Pancreas (tissue), 10 donors: ENCODE measurements at regions of chr16 and their contacts with region 1.

Region 1: GRCh38 chr16:57422026-57422944 is 17.7 kb downstream of the CCL17 start:
- DNase-seq: peak in 5 of 6 donors; percentile 39 to 56 (median 42)
- ATAC-seq: peak in 3 of 4 donors; percentile 71 to 81 (median 72)
- H3K4me3 ChIP-seq: no peak overlapping the region
- H3K27ac ChIP-seq: no peak overlapping the region
- H3K4me1 ChIP-seq: peaks cover 0 to 3% (median 2%) of the 10 kb centered on the region in 3 donors
- H3K27me3 ChIP-seq: no peaks in the 10 kb centered on the region
- CTCF ChIP-seq: peak; percentile 22 to 43 (median 42)

Region 2: GRCh38 chr16:57091975-57092785 is 330.1 kb before region 1 on chr16 and contains the start of gene CPNE2:
- intact Hi-C with region 1: loop called in 1 of 3 experiments (anchors 10 kb)
- DNase-seq: peak in 5 of 6 donors; percentile 60 to 85 (median 70)
- ATAC-seq: peak; percentile 82 to 92 (median 84)
- H3K4me3 ChIP-seq: peak within 1 kb of the TSS; percentile 57 to 89 (median 79)
- H3K27ac ChIP-seq: peak within 1 kb of the TSS; percentile 22 to 65 (median 36)
- H3K4me1 ChIP-seq: peaks cover 0 to 8% (median 0%) of the 10 kb centered on the region in 3 donors
- H3K27me3 ChIP-seq: no peaks in the 10 kb centered on the region
- CTCF ChIP-seq: no peak
- total RNA-seq, gene CPNE2: 3.2 to 12.4 (median 4.3) TPM

Region 3: DNA sequence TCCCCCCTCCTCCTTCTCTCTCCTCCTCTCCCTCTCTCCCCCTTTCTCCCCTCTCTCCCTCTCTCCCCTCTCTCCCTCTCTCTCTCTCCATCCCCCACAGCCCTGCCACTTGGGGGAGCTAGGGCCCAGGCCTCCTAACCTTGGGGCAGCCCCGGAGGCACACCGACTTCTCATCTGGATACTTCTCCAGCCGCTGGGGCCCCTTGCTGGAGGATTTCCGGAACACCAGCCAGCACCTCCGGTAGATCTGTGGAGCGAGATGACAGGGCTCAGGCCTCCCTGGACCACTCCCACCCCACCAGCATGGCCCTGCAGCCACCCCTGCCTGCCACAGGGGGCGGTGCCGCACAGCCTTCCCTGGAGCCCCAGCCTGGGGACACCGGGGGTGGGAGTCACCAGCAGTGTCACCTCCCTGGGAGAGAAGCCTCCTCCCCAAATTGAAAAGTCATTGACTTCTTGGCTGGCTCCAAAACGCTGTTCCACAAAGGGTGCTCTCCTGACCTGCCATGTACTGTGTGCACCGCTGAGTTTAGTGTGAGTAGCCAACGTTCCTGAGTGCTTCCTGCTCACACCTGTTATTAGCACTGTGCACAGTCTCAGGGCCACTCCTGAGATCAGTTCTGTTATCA is 53.5 kb after region 1 on chr16:
- intact Hi-C with region 1: no loop called
- DNase-seq: peak in 1 of 6 donors; percentile 69
- ATAC-seq: peak in 1 of 4 donors; percentile 27
- H3K4me3 ChIP-seq: no peak overlapping the region
- H3K27ac ChIP-seq: no peak overlapping the region
- H3K4me1 ChIP-seq: peaks cover 15 to 36% (median 15%) of the 10 kb centered on the region in 3 donors
- H3K27me3 ChIP-seq: no peaks in the 10 kb centered on the region
- CTCF ChIP-seq: no peak

Region 4: GRCh38 chr16:57519796-57520360 is 97.6 kb after region 1 on chr16:
- intact Hi-C with region 1: loop called in 2 of 3 experiments (anchors 2 to 10 kb)
- DNase-seq: peak; percentile 57 to 93 (median 80)
- ATAC-seq: peak; percentile 85 to 95 (median 91)
- H3K4me3 ChIP-seq: no peak overlapping the region
- H3K27ac ChIP-seq: no peak overlapping the region
- H3K4me1 ChIP-seq: no peaks in the 10 kb centered on the region
- H3K27me3 ChIP-seq: no peaks in the 10 kb centered on the region
- CTCF ChIP-seq: peak; percentile 94 to 98 (median 96)